K562 (cell line): ENCODE measurements at regions of chr9 and their contacts with region 1.

Region 1: DNA sequence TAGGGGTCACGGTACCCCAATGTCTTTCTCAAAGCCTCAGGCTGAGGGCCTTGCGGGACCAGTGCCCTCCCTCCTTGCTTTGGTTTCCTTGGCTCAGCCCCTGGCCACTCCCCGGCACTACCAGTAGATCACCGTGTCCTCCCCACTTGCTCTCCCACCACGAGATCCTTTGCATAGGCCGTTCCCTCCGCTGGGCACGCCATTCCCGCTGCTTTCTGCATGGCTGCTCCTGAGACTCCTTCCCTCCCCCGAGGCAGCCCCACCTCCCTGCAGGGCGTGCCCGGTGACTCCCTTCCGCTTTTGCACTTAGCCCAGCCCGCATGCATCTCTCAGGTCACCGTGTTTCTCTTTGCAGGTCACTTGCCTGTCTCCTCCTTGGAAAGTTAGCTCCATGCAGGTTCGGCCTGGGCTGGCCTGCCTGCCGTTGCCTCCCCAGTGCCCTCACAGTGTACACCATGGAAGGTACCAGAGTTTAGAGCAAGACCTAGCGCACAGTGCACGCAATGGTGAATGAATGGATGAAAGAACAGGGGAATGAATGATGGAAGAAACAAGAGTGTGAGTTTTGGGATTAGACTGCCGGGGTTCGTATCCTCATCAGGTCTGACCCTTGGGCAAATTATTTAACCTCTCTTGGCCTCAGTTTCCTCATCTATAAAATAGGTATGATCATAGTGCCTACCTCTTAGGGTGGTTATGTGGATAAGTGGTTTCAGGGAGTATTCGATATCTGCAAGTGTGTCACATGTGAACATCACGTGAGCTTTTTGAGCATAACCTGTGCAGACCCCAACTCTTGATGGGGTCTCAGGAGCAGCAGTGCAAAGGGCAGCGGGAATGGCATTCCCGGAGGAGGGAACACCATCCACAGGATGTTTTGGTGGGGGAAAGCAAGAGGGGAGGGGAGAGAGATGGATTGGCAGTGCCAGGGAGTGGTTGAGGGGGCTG is 214.3 kb downstream of the C9orf50 start:
- DNase-seq: peak; percentile 94 to 96 (median 94)
- ATAC-seq: peak; percentile 97
- H3K4me3 ChIP-seq: peak overlapping the region; percentile 31
- H3K27ac ChIP-seq: peak overlapping the region; percentile 79
- H3K4me1 ChIP-seq: peaks cover 57 to 75% of the 10 kb centered on the region in 2 experiments
- H3K27me3 ChIP-seq: no peaks in the 10 kb centered on the region
- CTCF ChIP-seq: 0 out of 6 replicates have a peak, but pooled peaks of 1 of the 3 experiments have one; percentile 4
- EP300 ChIP-seq: peak; percentile 57
- POLR2A ChIP-seq: peak; percentile 86
- RAD21 ChIP-seq: 0 out of 4 replicates have a peak, but pooled peaks of 1 of the 2 experiments have one; percentile 7

Region 2: GRCh38 chr9:129597355-129598088 is 191.0 kb after region 1 on chr9:
- CTCF ChIA-PET with region 1: no interaction called
- POLR2A ChIA-PET with region 1: no interaction called
- in situ Hi-C with region 1: no loop called
- intact Hi-C with region 1: loop called (anchors 10 kb)
- DNase-seq: no peak
- ATAC-seq: no peak
- H3K4me3 ChIP-seq: no peak overlapping the region
- H3K27ac ChIP-seq: no peak overlapping the region
- H3K4me1 ChIP-seq: peaks cover 20 to 39% of the 10 kb centered on the region in 2 experiments
- H3K27me3 ChIP-seq: no peaks in the 10 kb centered on the region
- CTCF ChIP-seq: no peak
- EP300 ChIP-seq: no peak
- POLR2A ChIP-seq: no peak
- RAD21 ChIP-seq: no peak

Region 3: DNA sequence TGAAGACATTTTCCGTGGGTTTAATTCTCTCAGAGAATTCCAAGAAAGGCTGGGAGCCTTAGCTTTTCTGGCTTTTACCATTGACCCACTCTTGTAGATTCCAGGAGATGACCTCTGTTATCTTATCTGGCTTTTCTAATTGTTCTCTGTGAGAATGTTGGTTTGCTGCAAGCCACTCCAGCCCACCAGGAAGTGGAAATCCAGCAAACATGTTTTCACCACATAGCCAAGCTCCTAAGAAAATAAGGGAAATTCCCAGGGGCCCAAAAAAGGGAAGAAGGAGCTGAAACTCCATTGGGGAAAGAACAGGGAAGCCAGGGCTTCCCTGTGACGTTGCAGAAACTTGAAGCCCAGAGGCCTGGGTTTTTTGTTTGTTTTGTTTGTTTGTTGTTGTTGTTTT is 666.8 kb after region 1 on chr9:
- CTCF ChIA-PET with region 1: no interaction called
- POLR2A ChIA-PET with region 1: no interaction called
- in situ Hi-C with region 1: no loop called
- intact Hi-C with region 1: no loop called
- DNase-seq: no peak
- ATAC-seq: no peak
- H3K4me3 ChIP-seq: no peak overlapping the region
- H3K27ac ChIP-seq: no peak overlapping the region
- H3K4me1 ChIP-seq: peaks cover 0 to 13% of the 10 kb centered on the region in 2 experiments; a peak in 3 of 5 replicates
- H3K27me3 ChIP-seq: no peaks in the 10 kb centered on the region
- CTCF ChIP-seq: no peak
- EP300 ChIP-seq: no peak
- POLR2A ChIP-seq: no peak
- RAD21 ChIP-seq: no peak